ENCODE measurements at regions of chr4 and their contacts with region 1.

Region 1: GRCh38 chr4:105274504-105274903 is 127.8 kb downstream of the TET2 start:
- DNase-seq: no peak
- ATAC-seq: no peak
- H3K4me3 ChIP-seq: no peak overlapping the region
- H3K4me3 Mint-ChIP-seq: no peak overlapping the region
- H3K27ac ChIP-seq: no peak overlapping the region
- H3K27ac Mint-ChIP-seq: peak overlapping the region; percentile 91 to 93
- H3K4me1 ChIP-seq: peaks cover 12% of the 10 kb centered on the region
- H3K4me1 Mint-ChIP-seq: peaks cover 71 to 78% of the 10 kb centered on the region in 2 donors
- H3K27me3 ChIP-seq: no peaks in the 10 kb centered on the region
- H3K27me3 Mint-ChIP-seq: no peaks in the 10 kb centered on the region
- CTCF ChIP-seq: no peak

Region 2: GRCh38 chr4:105146276-105147015 is 128.1 kb before region 1 on chr4 and contains the start of gene TET2:
- intact Hi-C with region 1: loop called (anchors 10 kb)
- DNase-seq: peak; percentile 72 to 90
- ATAC-seq: peak; percentile 87 to 95 (median 92)
- H3K4me3 ChIP-seq: peak within 1 kb of the TSS; percentile 67
- H3K4me3 Mint-ChIP-seq: peak within 1 kb of the TSS; percentile 97
- H3K27ac ChIP-seq: peak within 1 kb of the TSS; percentile 84
- H3K27ac Mint-ChIP-seq: peak within 1 kb of the TSS; percentile 96 to 99
- H3K4me1 ChIP-seq: peaks cover 4% of the 10 kb centered on the region
- H3K4me1 Mint-ChIP-seq: peaks cover 54 to 56% of the 10 kb centered on the region in 2 donors
- H3K27me3 ChIP-seq: no peaks in the 10 kb centered on the region
- H3K27me3 Mint-ChIP-seq: no peaks in the 10 kb centered on the region
- CTCF ChIP-seq: no peak
- total RNA-seq, gene TET2: 80.0 to 91.6 (median 82.8) TPM

Region 3: GRCh38 chr4:105236202-105236915 is 38.1 kb before region 1 on chr4:
- intact Hi-C with region 1: loop called (anchors 5 kb)
- DNase-seq: no peak
- ATAC-seq: peak; percentile 21 to 52 (median 43)
- H3K4me3 ChIP-seq: no peak overlapping the region
- H3K4me3 Mint-ChIP-seq: peak overlapping the region; percentile 73
- H3K27ac ChIP-seq: peak overlapping the region; percentile 48
- H3K27ac Mint-ChIP-seq: peak overlapping the region; percentile 77 to 88
- H3K4me1 ChIP-seq: peaks cover 29% of the 10 kb centered on the region
- H3K4me1 Mint-ChIP-seq: peaks cover 85 to 87% of the 10 kb centered on the region in 2 donors
- H3K27me3 ChIP-seq: no peaks in the 10 kb centered on the region
- H3K27me3 Mint-ChIP-seq: no peaks in the 10 kb centered on the region
- CTCF ChIP-seq: no peak